GM12878 (cell line): ENCODE measurements at regions of chr2 and their contacts with region 1.

Region 1: DNA sequence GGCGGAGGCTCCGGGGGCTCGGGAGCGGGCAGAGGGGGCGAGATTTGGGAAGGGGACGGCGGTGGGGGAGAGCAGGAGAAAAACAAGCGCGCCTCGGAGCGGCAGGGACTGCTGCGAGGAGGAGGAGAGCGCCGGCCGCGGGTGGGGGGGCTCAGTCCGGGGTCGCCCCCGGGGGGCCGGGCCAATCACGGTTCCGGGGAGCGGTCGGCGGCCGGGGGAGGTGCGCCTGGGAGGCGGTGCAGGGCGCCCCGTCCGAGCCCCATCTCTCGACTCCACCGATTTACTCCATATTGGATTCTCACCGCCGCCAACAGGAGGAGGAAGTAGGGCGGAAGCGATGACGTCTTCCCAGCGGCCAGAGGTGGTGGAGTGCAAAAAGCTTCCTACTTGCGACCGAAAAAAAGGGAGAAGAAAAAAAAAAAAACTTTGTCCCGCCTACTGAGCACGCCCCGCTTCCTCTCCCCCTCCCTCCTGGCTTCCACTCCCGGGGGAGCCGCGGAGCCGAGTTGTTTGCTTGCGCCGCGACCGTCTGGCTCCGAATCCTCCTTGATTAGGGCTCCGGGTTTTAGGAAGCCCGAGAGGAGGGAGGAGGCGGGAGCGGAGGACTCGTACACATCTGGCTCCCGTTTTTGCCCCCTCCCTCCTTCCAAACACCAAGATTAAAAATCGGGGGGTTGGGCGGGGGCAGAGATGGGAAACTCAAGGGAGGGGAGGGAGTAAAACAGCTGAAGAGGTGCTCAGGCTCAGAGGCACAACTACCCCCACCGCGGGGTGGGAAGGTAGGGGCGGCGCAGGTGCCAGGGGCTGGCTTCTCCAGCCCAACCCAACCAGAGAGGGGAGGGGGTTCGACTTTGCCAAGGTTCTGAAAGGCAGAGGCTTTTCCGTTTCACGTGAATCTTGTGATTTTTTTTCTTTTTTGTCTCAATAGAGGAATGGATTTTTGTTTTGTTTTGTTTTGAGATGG is at the start of gene SPRED2:
- DNase-seq: no peak
- ATAC-seq: peak; percentile 38
- H3K4me3 ChIP-seq: peak within 1 kb of the TSS; percentile 80
- H3K27ac ChIP-seq: peak within 1 kb of the TSS; percentile 43
- H3K4me1 ChIP-seq: peaks cover 6% of the 10 kb centered on the region
- H3K27me3 ChIP-seq: no peaks in the 10 kb centered on the region
- CTCF ChIP-seq: no peak
- EP300 ChIP-seq: no peak
- POLR2A ChIP-seq: no peak; the same call in 1 of the 2 replicates
- RAD21 ChIP-seq: 0 out of 2 replicates have a peak, but pooled peaks have one; percentile 18
- polyA plus RNA-seq, gene SPRED2: 3.0 to 3.2 TPM

Region 2: GRCh38 chr2:65278531-65278981 is 154.0 kb before region 1 on chr2:
- CTCF ChIA-PET with region 1: interaction called, 3 read pairs
- POLR2A ChIA-PET with region 1: no interaction called
- RAD21 ChIA-PET with region 1: interaction called, 10 read pairs
- SMC1A ChIA-PET with region 1: interaction called, 5 read pairs
- in situ Hi-C with region 1: no loop called
- intact Hi-C with region 1: no loop called
- DNase-seq: no peak
- ATAC-seq: no peak
- H3K4me3 ChIP-seq: no peak overlapping the region
- H3K27ac ChIP-seq: no peak overlapping the region
- H3K4me1 ChIP-seq: no peaks in the 10 kb centered on the region
- H3K27me3 ChIP-seq: no peaks in the 10 kb centered on the region
- CTCF ChIP-seq: no peak
- EP300 ChIP-seq: no peak
- POLR2A ChIP-seq: no peak
- RAD21 ChIP-seq: no peak

Region 3: GRCh38 chr2:65350684-65351083 is 81.8 kb before region 1 on chr2:
- CTCF ChIA-PET with region 1: interaction called, 3 read pairs
- POLR2A ChIA-PET with region 1: interaction called, 5 read pairs
- RAD21 ChIA-PET with region 1: interaction called, 14 read pairs
- SMC1A ChIA-PET with region 1: interaction called, 9 read pairs
- in situ Hi-C with region 1: no loop called
- intact Hi-C with region 1: no loop called
- DNase-seq: no peak
- ATAC-seq: peak; percentile 92
- H3K4me3 ChIP-seq: no peak overlapping the region
- H3K27ac ChIP-seq: peak overlapping the region; percentile 29; the same call in 1 of the 2 replicates
- H3K4me1 ChIP-seq: peaks cover 24% of the 10 kb centered on the region
- H3K27me3 ChIP-seq: no peaks in the 10 kb centered on the region
- CTCF ChIP-seq: peak; percentile 11 to 58 (median 45); a peak in 5 of 6 replicates
- EP300 ChIP-seq: no peak
- POLR2A ChIP-seq: no peak
- RAD21 ChIP-seq: peak; percentile 46

Region 4: GRCh38 chr2:65390134-65390533 is 42.4 kb before region 1 on chr2:
- CTCF ChIA-PET with region 1: interaction called, 7 read pairs
- POLR2A ChIA-PET with region 1: interaction called, 5 read pairs
- RAD21 ChIA-PET with region 1: interaction called, 17 read pairs
- SMC1A ChIA-PET with region 1: interaction called, 18 read pairs
- in situ Hi-C with region 1: no loop called
- intact Hi-C with region 1: loop called (anchors 1 kb)
- DNase-seq: peak; percentile 71
- ATAC-seq: peak; percentile 73
- H3K4me3 ChIP-seq: 0 out of 2 replicates have a peak overlapping the region, but pooled peaks have one; percentile 22
- H3K27ac ChIP-seq: peak overlapping the region; percentile 78
- H3K4me1 ChIP-seq: peaks cover 74% of the 10 kb centered on the region
- H3K27me3 ChIP-seq: no peaks in the 10 kb centered on the region
- CTCF ChIP-seq: no peak
- EP300 ChIP-seq: peak; percentile 62 to 85; a peak in 3 of 4 replicates
- POLR2A ChIP-seq: peak; percentile 56
- RAD21 ChIP-seq: no peak

Region 5: DNA sequence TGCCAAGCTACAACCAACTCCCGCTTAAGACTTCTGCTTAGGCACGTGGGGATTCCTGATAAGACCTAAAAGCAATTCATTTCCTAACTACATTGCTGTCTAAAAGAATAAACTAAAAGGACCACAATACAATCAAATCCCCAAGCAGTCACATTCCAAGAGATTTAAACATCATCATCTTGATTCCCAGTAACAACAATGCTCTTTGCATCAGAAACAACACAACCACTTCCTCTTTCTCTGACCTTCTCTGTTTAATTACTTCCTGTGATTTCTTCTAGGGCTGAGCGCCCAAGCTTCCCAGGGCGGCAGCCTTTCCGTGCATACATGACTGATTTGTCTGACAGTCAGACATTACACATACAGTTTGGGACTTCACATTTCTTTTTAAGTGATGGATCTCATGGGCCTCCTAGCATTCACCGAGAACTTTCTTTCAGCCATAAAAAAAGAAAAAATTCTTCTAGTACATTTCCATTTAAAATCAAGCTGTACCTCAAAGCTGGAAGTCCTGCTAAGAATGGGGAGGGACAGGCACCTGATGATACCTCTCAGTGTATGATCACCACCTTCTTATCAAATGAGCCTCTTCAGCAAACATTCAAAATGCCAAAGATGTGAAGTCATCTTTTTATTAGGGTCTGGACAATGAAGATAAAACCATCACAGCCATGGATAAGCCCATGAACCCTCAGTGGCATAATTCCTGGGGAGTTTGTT is 11.6 kb before region 1 on chr2:
- CTCF ChIA-PET with region 1: interaction called, 5 read pairs
- POLR2A ChIA-PET with region 1: interaction called, 9 read pairs
- RAD21 ChIA-PET with region 1: interaction called, 14 read pairs
- SMC1A ChIA-PET with region 1: interaction called, 32 read pairs
- in situ Hi-C with region 1: no loop called
- intact Hi-C with region 1: no loop called
- DNase-seq: no peak
- ATAC-seq: peak; percentile 85
- H3K4me3 ChIP-seq: peak overlapping the region; percentile 3; the same call in 1 of the 2 replicates
- H3K27ac ChIP-seq: peak overlapping the region; percentile 49
- H3K4me1 ChIP-seq: peaks cover 28% of the 10 kb centered on the region
- H3K27me3 ChIP-seq: no peaks in the 10 kb centered on the region
- CTCF ChIP-seq: no peak
- EP300 ChIP-seq: peak; percentile 19 to 32; a peak in 1 of 4 replicates
- POLR2A ChIP-seq: no peak
- RAD21 ChIP-seq: 0 out of 2 replicates have a peak, but pooled peaks have one; percentile 2